ENCODE measurements at regions of chr12 and their contacts with region 1.

Region 1: DNA sequence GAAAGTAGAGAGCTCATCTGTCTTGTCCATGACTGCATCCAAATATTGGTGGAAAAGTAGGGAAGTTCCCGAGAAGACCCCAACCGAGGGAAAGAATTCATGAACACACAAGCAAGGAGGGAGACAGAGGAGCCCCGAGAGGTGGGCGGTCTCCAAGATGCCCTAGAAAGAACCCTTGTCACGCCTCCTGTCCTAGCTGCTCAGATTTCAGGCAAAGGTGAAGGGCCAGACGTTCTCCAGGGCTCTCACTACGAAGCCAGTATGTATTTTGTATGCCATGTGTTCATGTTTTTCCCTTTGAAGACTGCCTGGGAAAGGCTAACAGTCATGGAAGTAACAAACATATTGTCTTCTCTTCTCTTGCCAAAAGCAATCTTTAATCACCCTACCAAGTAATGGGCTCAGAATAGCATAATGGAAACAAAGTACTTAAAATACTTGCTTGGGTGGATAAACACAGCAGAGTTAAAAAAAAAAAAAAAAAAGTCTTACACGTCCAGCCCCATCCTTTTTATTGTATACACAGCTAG is 99.2 kb upstream of the TBX3 start:
- DNase-seq: no peak
- H3K4me3 ChIP-seq: no peak overlapping the region
- H3K27ac ChIP-seq: no peak overlapping the region
- H3K4me1 ChIP-seq: no peaks in the 10 kb centered on the region
- H3K27me3 ChIP-seq: peaks cover 18% of the 10 kb centered on the region
- CTCF ChIP-seq: no peak

Region 2: GRCh38 chr12:114381177-114381576 is 402.0 kb before region 1 on chr12:
- CTCF ChIA-PET with region 1: no interaction called
- POLR2A ChIA-PET with region 1: interaction called, 11 read pairs
- intact Hi-C with region 1: no loop called
- DNase-seq: no peak
- H3K4me3 ChIP-seq: no peak overlapping the region
- H3K27ac ChIP-seq: no peak overlapping the region
- H3K4me1 ChIP-seq: no peaks in the 10 kb centered on the region
- H3K27me3 ChIP-seq: peaks cover 14% of the 10 kb centered on the region
- CTCF ChIP-seq: no peak